ENCODE measurements at regions of chr18 and their contacts with region 1.

Region 1: GRCh38 chr18:2958819-2959298 is 54.1 kb downstream of the LPIN2 start:
- DNase-seq: peak in 2 of 5 donors; percentile 37 to 64
- H3K4me3 ChIP-seq: peak overlapping the region in 1 of 2 donors; percentile 9
- H3K4me3 Mint-ChIP-seq: peak overlapping the region; percentile 4 to 89 (median 73)
- H3K27ac ChIP-seq: peak overlapping the region; percentile 79
- H3K27ac Mint-ChIP-seq: peak overlapping the region; percentile 88 to 99 (median 98)
- H3K4me1 ChIP-seq: peaks cover 95% of the 10 kb centered on the region
- H3K4me1 Mint-ChIP-seq: peaks cover 68 to 97% (median 85%) of the 10 kb centered on the region in 4 donors
- H3K27me3 ChIP-seq: no peaks in the 10 kb centered on the region
- H3K27me3 Mint-ChIP-seq: no peaks in the 10 kb centered on the region

Region 2: GRCh38 chr18:2948038-2948437 is 10.8 kb before region 1 on chr18:
- CTCF ChIA-PET with region 1: interaction called, 6 read pairs
- POLR2A ChIA-PET with region 1: interaction called, 1,352 read pairs
- intact Hi-C with region 1: loop called (anchors 2 kb)
- DNase-seq: no peak
- H3K4me3 ChIP-seq: no peak overlapping the region
- H3K4me3 Mint-ChIP-seq: no peak overlapping the region
- H3K27ac ChIP-seq: no peak overlapping the region
- H3K27ac Mint-ChIP-seq: peak overlapping the region in 2 of 7 donors; percentile 41 to 57
- H3K4me1 ChIP-seq: peaks cover 39% of the 10 kb centered on the region
- H3K4me1 Mint-ChIP-seq: peaks cover 33 to 66% (median 51%) of the 10 kb centered on the region in 4 donors
- H3K27me3 ChIP-seq: no peaks in the 10 kb centered on the region
- H3K27me3 Mint-ChIP-seq: no peaks in the 10 kb centered on the region

Region 3: DNA sequence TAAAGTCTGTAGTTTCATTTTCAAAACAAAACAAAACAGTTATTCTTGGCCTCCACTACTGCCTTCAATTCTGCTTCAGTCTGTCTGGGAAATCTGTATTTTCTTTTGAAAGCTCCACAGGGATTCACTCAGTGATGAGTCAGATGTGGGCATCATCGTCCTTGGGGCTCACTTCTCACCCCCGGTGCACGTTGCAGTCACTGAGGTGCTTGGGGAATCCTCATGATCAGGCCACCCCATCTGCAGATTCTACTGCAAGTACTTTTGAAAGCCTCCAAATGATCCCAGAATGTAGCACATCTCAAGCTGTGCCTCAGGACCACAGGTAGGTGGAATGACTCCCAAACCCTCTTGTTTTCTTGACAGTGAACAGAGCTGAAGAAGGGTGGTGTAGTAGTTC is 19.8 kb after region 1 on chr18:
- CTCF ChIA-PET with region 1: interaction called, 304 read pairs
- POLR2A ChIA-PET with region 1: interaction called, 1,352 read pairs
- intact Hi-C with region 1: loop called (anchors 2 kb)
- DNase-seq: peak in 1 of 5 donors; percentile 74
- H3K4me3 ChIP-seq: peak overlapping the region; percentile 8 to 31
- H3K4me3 Mint-ChIP-seq: peak overlapping the region; percentile 75 to 96 (median 90)
- H3K27ac ChIP-seq: peak overlapping the region; percentile 72
- H3K27ac Mint-ChIP-seq: peak overlapping the region; percentile 89 to 96 (median 93)
- H3K4me1 ChIP-seq: peaks cover 90% of the 10 kb centered on the region
- H3K4me1 Mint-ChIP-seq: peaks cover 55 to 93% (median 68%) of the 10 kb centered on the region in 4 donors
- H3K27me3 ChIP-seq: no peaks in the 10 kb centered on the region
- H3K27me3 Mint-ChIP-seq: no peaks in the 10 kb centered on the region

Region 4: DNA sequence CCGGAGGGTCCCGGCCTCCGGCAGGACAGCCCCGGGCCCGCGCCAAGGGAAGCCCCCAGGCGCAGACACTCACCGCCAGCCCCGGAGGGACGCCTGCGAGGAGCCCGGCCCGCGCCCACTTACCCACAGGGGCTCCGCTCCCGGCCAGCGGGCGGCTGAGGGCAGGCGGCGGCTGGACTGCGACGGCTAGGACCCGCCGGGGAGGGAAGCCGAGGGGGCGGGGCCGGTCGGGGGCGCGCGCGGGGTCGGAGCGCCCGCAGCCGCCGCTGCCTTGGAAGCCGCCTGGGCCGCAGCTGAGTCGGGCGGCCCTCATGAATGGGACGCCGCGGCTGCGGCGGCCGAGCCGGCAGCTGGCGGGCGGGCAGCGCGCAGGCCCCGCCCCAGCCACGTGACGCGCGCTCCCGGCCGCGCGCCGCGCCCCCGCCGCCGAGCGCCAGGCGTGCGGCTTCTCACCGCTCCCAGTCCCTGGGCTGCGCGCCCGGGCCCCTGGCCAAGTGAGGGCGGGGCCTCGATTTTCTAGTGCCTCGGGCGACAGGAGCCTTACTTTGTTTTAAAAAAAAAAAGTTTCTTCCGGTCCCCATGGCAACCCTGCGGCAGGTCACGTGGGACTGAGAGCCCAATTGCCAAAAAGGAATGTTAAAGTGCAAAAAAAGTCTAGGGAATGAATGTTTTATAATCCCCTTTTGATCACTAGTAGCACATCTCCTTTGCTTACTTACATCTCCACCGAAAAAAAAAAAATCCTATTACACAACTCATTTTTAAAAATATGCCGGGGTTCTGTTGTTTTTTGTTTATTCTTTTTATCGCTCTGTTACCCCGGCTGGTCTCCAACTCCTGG is 54.3 kb after region 1 on chr18 and contains the start of gene LPIN2:
- CTCF ChIA-PET with region 1: no interaction called
- POLR2A ChIA-PET with region 1: interaction called, 5 read pairs
- intact Hi-C with region 1: loop called (anchors 1 kb)
- DNase-seq: peak; percentile 97 to 98 (median 98)
- H3K4me3 ChIP-seq: peak within 1 kb of the TSS; percentile 55 to 70
- H3K4me3 Mint-ChIP-seq: peak within 1 kb of the TSS; percentile 93 to 99 (median 96)
- H3K27ac ChIP-seq: peak within 1 kb of the TSS; percentile 63
- H3K27ac Mint-ChIP-seq: peak within 1 kb of the TSS; percentile 94 to 98 (median 98)
- H3K4me1 ChIP-seq: peaks cover 68% of the 10 kb centered on the region
- H3K4me1 Mint-ChIP-seq: peaks cover 51 to 75% (median 68%) of the 10 kb centered on the region in 4 donors
- H3K27me3 ChIP-seq: no peaks in the 10 kb centered on the region
- H3K27me3 Mint-ChIP-seq: no peaks in the 10 kb centered on the region
- total RNA-seq, gene LPIN2: 95.4 to 103 TPM

Region 5: DNA sequence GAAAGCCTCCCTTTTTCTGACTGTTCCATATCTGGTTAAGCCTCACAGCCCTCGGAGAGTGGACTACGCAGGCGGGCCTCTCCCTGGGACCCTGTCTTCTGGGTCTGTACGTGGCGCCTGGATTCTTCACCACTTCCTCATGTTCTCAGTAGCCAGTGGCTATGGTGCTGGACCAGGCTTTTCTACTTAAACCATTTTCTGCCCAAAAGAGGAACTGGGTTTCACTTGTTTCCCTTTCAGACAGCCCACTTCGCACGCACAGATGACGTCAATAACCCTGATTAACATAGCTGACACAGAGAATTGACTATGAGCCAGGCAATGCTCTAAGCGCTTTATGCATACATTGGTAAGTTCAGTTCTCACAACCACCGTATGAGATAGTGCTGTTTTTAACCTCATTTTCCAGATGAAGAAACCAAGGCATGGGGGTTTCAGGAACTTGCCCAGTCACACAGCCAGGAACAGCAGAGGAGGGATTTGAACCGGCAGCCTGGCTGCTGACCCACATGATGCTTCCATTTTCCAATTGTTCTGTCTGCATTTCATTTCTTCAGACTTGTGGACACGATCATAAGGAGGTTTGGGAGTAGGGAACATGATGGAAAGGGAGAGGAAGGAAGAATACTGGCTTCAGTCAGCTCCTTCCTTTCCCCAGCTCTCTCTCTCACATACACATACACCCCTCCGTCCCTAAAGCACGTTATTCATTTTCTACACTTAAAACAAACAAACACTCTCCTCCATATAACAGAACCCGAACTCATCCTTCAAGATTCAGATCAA is 219.2 kb after region 1 on chr18:
- CTCF ChIA-PET with region 1: no interaction called
- POLR2A ChIA-PET with region 1: no interaction called
- intact Hi-C with region 1: no loop called
- DNase-seq: no peak
- H3K4me3 ChIP-seq: no peak overlapping the region
- H3K4me3 Mint-ChIP-seq: no peak overlapping the region
- H3K27ac ChIP-seq: no peak overlapping the region
- H3K27ac Mint-ChIP-seq: peak overlapping the region in 1 of 7 donors; percentile 63
- H3K4me1 ChIP-seq: no peaks in the 10 kb centered on the region
- H3K4me1 Mint-ChIP-seq: no peaks in the 10 kb centered on the region
- H3K27me3 ChIP-seq: no peaks in the 10 kb centered on the region
- H3K27me3 Mint-ChIP-seq: no peaks in the 10 kb centered on the region

Measured in CD4-positive, alpha-beta memory T cell (primary cell).